Activated naive CD4-positive, alpha-beta T cell treated with anti-CD3 and anti-CD28 coated beads for 36 hours (primary cell): ENCODE measurements at regions of chr6 and their contacts with region 1.

Region 1: DNA sequence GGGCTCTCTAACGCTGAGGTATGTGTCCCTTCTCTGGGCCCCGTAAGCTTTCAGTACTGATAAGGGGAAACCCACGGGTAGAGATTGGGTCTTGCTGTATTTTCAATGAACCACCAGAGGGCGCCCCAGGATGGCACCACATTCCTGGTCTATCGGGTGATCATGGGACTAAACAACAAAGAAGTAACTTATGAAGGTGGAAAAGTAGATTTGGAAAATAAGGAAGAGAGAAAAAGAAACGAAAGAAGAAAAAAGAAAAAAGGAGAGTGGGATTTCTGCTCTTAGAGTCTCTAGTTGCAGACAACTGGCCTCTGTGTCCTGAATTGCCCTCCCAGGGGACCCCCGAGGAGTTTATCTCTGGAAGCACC is 93.8 kb downstream of the GMPR start:
- DNase-seq: peak; percentile 94
- H3K4me3 Mint-ChIP-seq: no peak overlapping the region
- H3K27ac Mint-ChIP-seq: no peak overlapping the region
- H3K4me1 Mint-ChIP-seq: no peaks in the 10 kb centered on the region
- H3K27me3 Mint-ChIP-seq: no peaks in the 10 kb centered on the region

Region 2: GRCh38 chr6:16031278-16031981 is 300.7 kb before region 1 on chr6:
- CTCF ChIA-PET with region 1: no interaction called
- intact Hi-C with region 1: no loop called
- DNase-seq: no peak
- H3K4me3 Mint-ChIP-seq: no peak overlapping the region
- H3K27ac Mint-ChIP-seq: no peak overlapping the region
- H3K4me1 Mint-ChIP-seq: no peaks in the 10 kb centered on the region
- H3K27me3 Mint-ChIP-seq: peaks cover 3% of the 10 kb centered on the region

Region 3: DNA sequence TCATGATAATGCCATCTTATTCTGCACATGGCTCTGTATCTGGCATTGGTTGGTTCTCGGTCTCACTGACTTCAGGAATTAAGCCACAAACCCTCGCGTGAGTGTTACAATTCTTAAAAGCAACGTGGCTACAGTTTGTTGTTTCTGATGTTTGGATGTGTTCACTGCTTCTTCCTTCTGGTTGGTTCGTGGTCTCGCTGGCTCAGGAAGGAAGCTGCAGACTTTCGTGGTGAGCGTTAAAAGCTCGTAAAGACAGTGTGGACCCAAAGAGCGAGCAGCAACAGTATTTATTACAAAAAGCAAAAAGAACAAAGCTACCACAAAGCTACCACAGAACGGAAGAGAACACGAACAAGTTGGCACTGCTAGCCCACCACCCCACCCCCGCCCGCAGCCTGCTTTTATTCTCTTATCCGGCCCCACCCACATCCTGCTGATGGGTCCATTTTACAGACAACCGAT is 152.2 kb before region 1 on chr6:
- CTCF ChIA-PET with region 1: no interaction called
- intact Hi-C with region 1: no loop called
- DNase-seq: peak; percentile 49
- H3K4me3 Mint-ChIP-seq: peak overlapping the region; percentile 63
- H3K27ac Mint-ChIP-seq: peak overlapping the region; percentile 71
- H3K4me1 Mint-ChIP-seq: peaks cover 20% of the 10 kb centered on the region
- H3K27me3 Mint-ChIP-seq: no peaks in the 10 kb centered on the region

Region 4: GRCh38 chr6:16286148-16286522 is 46.0 kb before region 1 on chr6:
- CTCF ChIA-PET with region 1: interaction called, 8 read pairs
- intact Hi-C with region 1: loop called (anchors 1 kb)
- DNase-seq: peak; percentile 28
- H3K4me3 Mint-ChIP-seq: no peak overlapping the region
- H3K27ac Mint-ChIP-seq: no peak overlapping the region
- H3K4me1 Mint-ChIP-seq: no peaks in the 10 kb centered on the region
- H3K27me3 Mint-ChIP-seq: no peaks in the 10 kb centered on the region

Region 5: DNA sequence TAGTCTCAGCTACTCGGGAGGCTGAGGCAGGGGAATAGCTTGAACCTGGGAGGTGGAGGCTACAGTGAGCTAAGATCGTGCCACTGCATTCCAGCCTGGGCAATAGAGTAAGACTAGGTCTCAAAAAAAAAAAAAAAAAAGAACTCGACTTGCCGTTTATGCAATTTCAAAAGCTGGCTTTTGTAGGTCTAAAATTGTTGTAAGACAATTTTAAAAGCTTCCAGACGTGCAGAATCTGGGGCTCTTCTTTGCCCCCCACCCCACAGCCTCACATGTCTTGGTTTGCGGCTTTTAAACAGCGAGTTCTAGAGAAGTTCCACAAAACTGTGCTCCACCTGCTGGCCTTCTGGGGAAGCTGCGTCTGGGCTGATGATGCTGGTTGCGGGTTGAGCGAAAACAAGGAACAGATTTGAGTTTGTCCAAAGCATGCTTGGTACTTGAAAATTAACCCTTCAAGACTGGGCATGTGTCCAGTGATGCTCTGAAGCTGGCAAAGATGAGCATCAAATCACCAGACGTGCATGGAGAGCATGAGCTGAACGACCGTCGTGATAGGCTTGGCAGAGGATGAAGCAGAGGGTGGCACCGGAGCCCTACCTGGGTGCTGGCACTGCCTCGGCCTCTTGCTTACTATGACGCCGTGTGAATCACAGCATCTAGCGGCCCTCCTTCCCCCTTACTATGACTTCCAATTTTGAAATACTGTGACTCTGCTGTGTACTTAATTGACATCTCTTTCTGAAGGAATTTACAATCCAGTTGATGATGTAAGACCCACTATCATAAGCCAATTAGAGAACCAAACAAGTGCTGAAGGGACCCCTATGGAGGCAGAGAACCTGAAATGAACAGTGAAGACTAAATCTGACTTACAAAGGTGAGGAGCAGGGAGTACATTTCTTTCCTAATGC is 77.6 kb after region 1 on chr6:
- CTCF ChIA-PET with region 1: interaction called, 10 read pairs
- intact Hi-C with region 1: loop called (anchors 1 kb)
- DNase-seq: peak; percentile 75
- H3K4me3 Mint-ChIP-seq: peak overlapping the region; percentile 30
- H3K27ac Mint-ChIP-seq: peak overlapping the region; percentile 53
- H3K4me1 Mint-ChIP-seq: peaks cover 31% of the 10 kb centered on the region
- H3K27me3 Mint-ChIP-seq: no peaks in the 10 kb centered on the region

Region 6: GRCh38 chr6:16770701-16771569 is 438.8 kb after region 1 on chr6:
- CTCF ChIA-PET with region 1: interaction called, 41 read pairs
- intact Hi-C with region 1: loop called (anchors 1 kb)
- DNase-seq: peak; percentile 82
- H3K4me3 Mint-ChIP-seq: no peak overlapping the region
- H3K27ac Mint-ChIP-seq: no peak overlapping the region
- H3K4me1 Mint-ChIP-seq: peaks cover 46% of the 10 kb centered on the region
- H3K27me3 Mint-ChIP-seq: no peaks in the 10 kb centered on the region

Region 7: DNA sequence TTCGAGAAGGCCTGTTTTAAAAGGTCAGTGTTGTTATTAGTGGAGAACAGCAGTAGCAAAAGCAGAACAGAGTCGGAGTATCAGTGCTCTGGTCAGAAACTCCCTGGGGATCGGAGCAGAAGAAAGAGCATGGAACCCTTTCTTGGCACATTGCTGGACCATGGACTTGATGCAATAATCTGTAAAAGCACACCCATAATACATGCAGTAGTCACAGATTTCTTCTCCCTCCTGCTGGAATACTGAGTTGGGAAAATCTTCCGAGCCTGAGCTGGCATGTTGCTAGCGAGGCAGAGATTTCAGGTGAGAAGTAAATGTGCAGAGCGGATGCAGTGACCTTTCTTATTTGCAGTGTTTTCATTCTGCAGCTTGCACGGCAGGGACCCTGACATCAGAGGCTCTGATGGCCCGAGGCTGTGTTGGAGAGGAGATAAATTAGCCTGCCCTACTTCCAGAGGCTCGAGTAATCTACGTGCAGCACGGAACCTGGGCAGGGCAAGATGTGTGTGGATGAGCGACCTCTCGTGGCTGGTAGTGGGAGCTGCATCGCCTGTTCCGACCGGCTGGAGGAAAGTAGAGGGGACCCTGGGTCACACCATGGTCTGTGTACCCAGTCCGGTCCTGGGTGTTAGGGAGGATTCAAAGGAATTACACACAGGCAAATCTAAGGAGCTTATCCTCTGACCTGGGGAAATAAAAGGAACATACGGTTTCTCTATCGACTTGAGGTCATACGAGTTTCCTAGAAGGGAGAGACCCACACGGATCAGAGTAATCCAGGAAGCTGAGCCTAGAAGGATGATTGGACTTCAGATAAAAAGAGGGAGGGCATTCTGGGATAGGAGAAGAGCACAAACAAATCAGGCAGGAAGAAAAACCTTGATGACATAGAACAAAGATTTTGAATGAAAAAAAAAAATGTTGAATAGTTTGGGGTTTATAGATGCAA is 632.7 kb after region 1 on chr6:
- CTCF ChIA-PET with region 1: interaction called, 6 read pairs
- intact Hi-C with region 1: loop called (anchors 1 kb)
- DNase-seq: peak; percentile 79
- H3K4me3 Mint-ChIP-seq: no peak overlapping the region
- H3K27ac Mint-ChIP-seq: no peak overlapping the region
- H3K4me1 Mint-ChIP-seq: peaks cover 5% of the 10 kb centered on the region
- H3K27me3 Mint-ChIP-seq: peaks cover 23% of the 10 kb centered on the region